Left ventricle myocardium inferior (tissue), 1 donor: ENCODE measurements at regions of chr10 and their contacts with region 1.

Region 1: GRCh38 chr10:6401562-6402348 is 178.3 kb downstream of the PRKCQ start:
- DNase-seq: peak; percentile 54
- H3K4me3 ChIP-seq: peak overlapping the region; percentile 59
- H3K27ac ChIP-seq: peak overlapping the region; percentile 27
- H3K4me1 ChIP-seq: peaks cover 5% of the 10 kb centered on the region
- H3K27me3 ChIP-seq: peaks cover 9% of the 10 kb centered on the region
- CTCF ChIP-seq: peak; percentile 80

Region 2: DNA sequence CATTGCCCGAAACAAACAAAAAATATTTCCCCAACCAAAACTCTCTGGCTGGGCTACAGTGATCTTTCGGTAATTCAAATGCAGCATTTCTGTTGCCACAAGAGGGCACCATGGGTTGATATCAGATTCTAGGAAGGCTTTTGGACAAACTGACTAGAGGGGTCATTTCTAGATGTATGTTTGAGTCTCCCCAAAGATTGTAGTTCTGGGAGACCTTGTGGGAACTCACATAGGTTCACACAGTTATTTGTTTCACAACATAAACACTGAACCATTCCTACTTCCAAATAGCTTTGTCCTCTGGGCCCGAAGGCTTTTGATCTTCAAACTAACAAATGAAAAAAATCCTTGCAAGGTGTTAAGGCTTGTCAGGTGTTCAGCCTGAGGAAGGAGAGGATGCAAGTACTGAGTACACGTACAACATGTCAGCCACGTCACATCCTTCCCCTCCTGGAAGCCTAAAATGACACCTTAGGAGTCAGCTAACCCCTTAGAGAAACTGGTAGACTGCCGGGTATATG is 387.5 kb before region 1 on chr10:
- intact Hi-C with region 1: loop called (anchors 10 kb)
- DNase-seq: no peak
- H3K4me3 ChIP-seq: no peak overlapping the region
- H3K27ac ChIP-seq: peak overlapping the region; percentile 36
- H3K4me1 ChIP-seq: peaks cover 9% of the 10 kb centered on the region
- H3K27me3 ChIP-seq: no peaks in the 10 kb centered on the region
- CTCF ChIP-seq: peak; percentile 86

Region 3: GRCh38 chr10:6108603-6109443 is 292.9 kb before region 1 on chr10:
- intact Hi-C with region 1: loop called (anchors 10 kb)
- DNase-seq: no peak
- H3K4me3 ChIP-seq: no peak overlapping the region
- H3K27ac ChIP-seq: no peak overlapping the region
- H3K4me1 ChIP-seq: peaks cover 47% of the 10 kb centered on the region
- H3K27me3 ChIP-seq: no peaks in the 10 kb centered on the region
- CTCF ChIP-seq: peak; percentile 79

Region 4: GRCh38 chr10:6128591-6129251 is 273.0 kb before region 1 on chr10:
- intact Hi-C with region 1: no loop called
- DNase-seq: no peak
- H3K4me3 ChIP-seq: peak overlapping the region; percentile 23
- H3K27ac ChIP-seq: no peak overlapping the region
- H3K4me1 ChIP-seq: peaks cover 23% of the 10 kb centered on the region
- H3K27me3 ChIP-seq: peaks cover 6% of the 10 kb centered on the region
- CTCF ChIP-seq: no peak

Region 5: GRCh38 chr10:6211671-6212635 is 189.8 kb before region 1 on chr10:
- intact Hi-C with region 1: loop called (anchors 10 kb)
- DNase-seq: peak; percentile 61
- H3K4me3 ChIP-seq: peak overlapping the region; percentile 17
- H3K27ac ChIP-seq: peak overlapping the region; percentile 46
- H3K4me1 ChIP-seq: peaks cover 23% of the 10 kb centered on the region
- H3K27me3 ChIP-seq: no peaks in the 10 kb centered on the region
- CTCF ChIP-seq: no peak